Caco-2 (cell line): ENCODE measurements at regions of chr5 and their contacts with region 1.

Region 1: DNA sequence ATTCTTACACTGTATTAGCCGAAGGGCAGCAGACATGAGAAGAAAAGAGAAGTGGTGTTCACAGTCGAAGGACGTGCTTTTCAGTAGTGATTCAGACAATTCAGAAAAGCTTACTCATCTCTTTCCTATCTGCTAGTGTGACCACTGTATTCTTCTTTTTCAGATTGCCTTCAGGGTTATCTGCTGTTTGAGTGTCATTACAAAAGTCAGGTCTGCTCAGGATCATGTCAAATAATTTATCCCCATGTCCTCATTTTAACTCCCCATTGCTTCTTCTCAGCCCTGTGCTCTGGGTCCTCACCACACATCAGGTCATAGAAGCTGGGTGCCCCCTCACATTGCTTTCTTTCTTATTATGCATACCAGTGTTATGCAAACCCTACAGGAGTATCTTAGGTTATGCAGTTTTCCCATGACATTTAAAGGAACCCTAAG is 394.0 kb downstream of the CETN3 start:
- DNase-seq: no peak
- H3K4me3 ChIP-seq: no peak overlapping the region
- H3K4me3 Mint-ChIP-seq: no peak overlapping the region
- H3K27ac Mint-ChIP-seq: peak overlapping the region; percentile 23
- H3K4me1 ChIP-seq: no peaks in the 10 kb centered on the region
- H3K4me1 Mint-ChIP-seq: peaks cover 21% of the 10 kb centered on the region
- H3K27me3 ChIP-seq: no peaks in the 10 kb centered on the region
- H3K27me3 Mint-ChIP-seq: no peaks in the 10 kb centered on the region
- CTCF ChIP-seq: no peak

Region 2: DNA sequence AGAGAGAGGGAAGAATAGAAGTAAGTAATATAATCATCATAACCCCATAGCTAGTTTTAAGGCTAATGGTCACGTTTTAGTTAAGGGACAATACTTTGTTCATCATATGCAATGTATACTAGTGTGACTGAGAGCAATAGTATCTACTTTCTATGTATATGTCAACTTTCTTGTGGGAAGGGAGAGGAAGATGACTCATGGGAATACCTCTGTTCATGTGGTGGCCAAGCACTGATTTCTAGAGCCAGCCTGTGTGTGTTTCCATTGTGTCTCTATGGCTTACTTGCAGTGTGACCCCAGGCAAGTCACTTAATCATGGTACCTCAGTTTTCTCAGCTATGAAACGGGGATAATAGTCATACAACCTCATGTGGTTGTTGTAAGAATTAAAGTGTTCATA is 245.6 kb before region 1 on chr5:
- CTCF ChIA-PET with region 1: no interaction called
- POLR2A ChIA-PET with region 1: no interaction called
- intact Hi-C with region 1: no loop called
- DNase-seq: no peak
- H3K4me3 ChIP-seq: no peak overlapping the region
- H3K4me3 Mint-ChIP-seq: no peak overlapping the region
- H3K27ac Mint-ChIP-seq: no peak overlapping the region
- H3K4me1 ChIP-seq: no peaks in the 10 kb centered on the region
- H3K4me1 Mint-ChIP-seq: no peaks in the 10 kb centered on the region
- H3K27me3 ChIP-seq: no peaks in the 10 kb centered on the region
- H3K27me3 Mint-ChIP-seq: no peaks in the 10 kb centered on the region
- CTCF ChIP-seq: no peak

Region 3: GRCh38 chr5:89871906-89872305 is 143.7 kb before region 1 on chr5:
- CTCF ChIA-PET with region 1: no interaction called
- POLR2A ChIA-PET with region 1: no interaction called
- intact Hi-C with region 1: loop called (anchors 5 kb)
- DNase-seq: no peak
- H3K4me3 ChIP-seq: no peak overlapping the region
- H3K4me3 Mint-ChIP-seq: no peak overlapping the region
- H3K27ac Mint-ChIP-seq: no peak overlapping the region
- H3K4me1 ChIP-seq: no peaks in the 10 kb centered on the region
- H3K4me1 Mint-ChIP-seq: no peaks in the 10 kb centered on the region
- H3K27me3 ChIP-seq: no peaks in the 10 kb centered on the region
- H3K27me3 Mint-ChIP-seq: no peaks in the 10 kb centered on the region
- CTCF ChIP-seq: no peak